ENCODE measurements at regions of chr7 and their contacts with region 1.

Region 1: GRCh38 chr7:3092468-3092867 is 48.8 kb upstream of the CARD11 start:
- DNase-seq: peak; percentile 94
- H3K4me3 Mint-ChIP-seq: peak overlapping the region; percentile 59
- H3K27ac Mint-ChIP-seq: peak overlapping the region; percentile 96
- H3K4me1 Mint-ChIP-seq: peaks cover 70% of the 10 kb centered on the region
- H3K27me3 Mint-ChIP-seq: no peaks in the 10 kb centered on the region

Region 2: GRCh38 chr7:3028071-3028757 is 64.3 kb before region 1 on chr7:
- CTCF ChIA-PET with region 1: no interaction called
- intact Hi-C with region 1: loop called (anchors 1 kb)
- DNase-seq: peak; percentile 88
- H3K4me3 Mint-ChIP-seq: peak overlapping the region; percentile 65
- H3K27ac Mint-ChIP-seq: peak overlapping the region; percentile 92
- H3K4me1 Mint-ChIP-seq: peaks cover 57% of the 10 kb centered on the region
- H3K27me3 Mint-ChIP-seq: no peaks in the 10 kb centered on the region

Region 3: DNA sequence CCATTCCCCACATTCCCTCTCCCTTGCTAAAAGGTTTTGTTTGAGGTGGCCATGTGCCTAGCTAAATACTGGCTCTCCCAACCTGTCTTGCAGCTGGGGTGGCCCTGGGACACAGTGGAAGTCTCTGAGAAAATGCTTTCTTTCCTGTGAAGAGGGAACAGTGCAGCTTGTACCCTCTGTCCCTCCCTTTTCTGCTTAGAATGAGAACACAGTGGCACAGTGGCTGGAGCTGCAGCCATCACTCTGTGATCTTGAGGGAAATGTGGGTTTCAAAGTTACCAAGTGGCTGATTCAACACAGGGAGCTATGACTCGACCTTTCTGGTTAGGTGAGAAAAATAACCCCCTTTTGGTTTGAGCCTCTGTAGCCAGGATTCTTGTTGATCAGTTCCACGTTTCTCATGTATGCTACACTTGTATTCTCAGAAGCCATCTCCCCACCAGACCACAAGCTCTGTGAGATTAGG is 13.9 kb after region 1 on chr7:
- CTCF ChIA-PET with region 1: interaction called, 7 read pairs
- intact Hi-C with region 1: loop called (anchors 1 kb)
- DNase-seq: peak; percentile 78
- H3K4me3 Mint-ChIP-seq: no peak overlapping the region
- H3K27ac Mint-ChIP-seq: peak overlapping the region; percentile 86
- H3K4me1 Mint-ChIP-seq: peaks cover 68% of the 10 kb centered on the region
- H3K27me3 Mint-ChIP-seq: no peaks in the 10 kb centered on the region

Region 4: DNA sequence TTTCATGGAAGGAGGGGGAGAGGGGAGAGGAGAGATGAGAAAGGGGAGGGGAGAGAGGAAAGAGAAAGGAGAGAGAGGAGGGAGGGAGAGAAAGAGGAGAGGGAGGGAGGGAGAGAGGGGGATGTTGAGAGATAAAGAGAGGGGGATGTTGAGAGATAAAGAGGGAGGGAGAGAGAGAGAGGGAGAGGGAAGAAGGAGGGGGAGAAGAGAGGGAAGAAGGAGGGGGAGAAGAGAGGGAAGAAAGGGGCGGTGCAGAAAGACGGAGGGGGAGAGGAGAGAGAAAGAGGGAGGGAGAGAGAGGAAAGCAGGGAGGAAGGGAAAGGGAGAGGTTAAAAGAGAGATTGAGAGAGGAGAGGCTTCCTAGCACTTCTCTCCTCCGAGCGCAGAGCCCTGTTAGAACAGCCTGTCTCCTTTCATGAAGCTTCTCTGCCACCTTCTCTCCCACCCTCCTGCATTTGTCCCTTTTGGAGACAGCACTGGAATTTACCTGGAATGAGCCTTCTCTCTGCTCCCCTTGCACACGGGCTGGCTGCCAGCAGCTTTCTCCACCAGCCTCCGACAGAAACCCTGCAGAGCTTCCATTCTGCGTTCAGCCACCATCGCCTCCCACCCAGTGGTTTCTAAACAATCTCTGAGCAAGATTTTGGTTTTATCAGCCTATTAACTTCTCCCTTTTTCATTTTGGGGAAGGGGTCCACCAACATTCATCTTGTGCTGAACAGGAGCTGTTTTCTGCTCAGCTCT is 25.2 kb after region 1 on chr7:
- CTCF ChIA-PET with region 1: interaction called, 13 read pairs
- intact Hi-C with region 1: loop called (anchors 1 kb)
- DNase-seq: peak; percentile 73
- H3K4me3 Mint-ChIP-seq: peak overlapping the region; percentile 77
- H3K27ac Mint-ChIP-seq: peak overlapping the region; percentile 81
- H3K4me1 Mint-ChIP-seq: peaks cover 54% of the 10 kb centered on the region
- H3K27me3 Mint-ChIP-seq: no peaks in the 10 kb centered on the region

Region 5: GRCh38 chr7:3154912-3155494 is 62.5 kb after region 1 on chr7:
- CTCF ChIA-PET with region 1: interaction called, 13 read pairs
- intact Hi-C with region 1: no loop called
- DNase-seq: peak; percentile 82
- H3K4me3 Mint-ChIP-seq: no peak overlapping the region
- H3K27ac Mint-ChIP-seq: no peak overlapping the region
- H3K4me1 Mint-ChIP-seq: peaks cover 20% of the 10 kb centered on the region
- H3K27me3 Mint-ChIP-seq: no peaks in the 10 kb centered on the region

Region 6: GRCh38 chr7:3461923-3462322 is 369.5 kb after region 1 on chr7:
- CTCF ChIA-PET with region 1: no interaction called
- intact Hi-C with region 1: loop called (anchors 10 kb)
- DNase-seq: peak; percentile 90
- H3K4me3 Mint-ChIP-seq: peak overlapping the region; percentile 66
- H3K27ac Mint-ChIP-seq: peak overlapping the region; percentile 90
- H3K4me1 Mint-ChIP-seq: peaks cover 54% of the 10 kb centered on the region
- H3K27me3 Mint-ChIP-seq: no peaks in the 10 kb centered on the region